ENCODE measurements at regions of chr3 and their contacts with region 1.

Region 1: DNA sequence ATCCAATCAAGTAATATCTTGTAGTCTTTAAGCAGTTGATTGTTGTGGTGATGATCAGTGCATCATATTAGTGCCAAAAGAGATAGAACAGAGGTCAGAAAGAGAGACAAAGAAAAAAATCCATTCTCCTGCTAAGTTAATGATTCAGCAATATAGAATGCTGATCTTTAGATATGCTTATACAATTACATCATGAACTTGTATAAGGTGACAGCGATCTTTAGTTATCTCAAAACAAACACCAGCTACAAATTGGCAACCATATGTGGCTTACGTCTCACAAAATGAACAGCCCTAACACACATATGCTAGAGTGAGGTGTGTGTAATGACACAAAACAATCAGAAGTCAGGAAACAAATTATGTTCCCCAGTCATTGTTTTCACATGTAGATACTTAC is 12.5 kb downstream of the LSAMP start:
- DNase-seq: no peak
- ATAC-seq: no peak
- H3K4me3 Mint-ChIP-seq: no peak overlapping the region
- H3K27ac Mint-ChIP-seq: no peak overlapping the region
- H3K4me1 Mint-ChIP-seq: peaks cover 5% of the 10 kb centered on the region
- H3K27me3 Mint-ChIP-seq: no peaks in the 10 kb centered on the region
- CTCF ChIP-seq: no peak

Region 2: DNA sequence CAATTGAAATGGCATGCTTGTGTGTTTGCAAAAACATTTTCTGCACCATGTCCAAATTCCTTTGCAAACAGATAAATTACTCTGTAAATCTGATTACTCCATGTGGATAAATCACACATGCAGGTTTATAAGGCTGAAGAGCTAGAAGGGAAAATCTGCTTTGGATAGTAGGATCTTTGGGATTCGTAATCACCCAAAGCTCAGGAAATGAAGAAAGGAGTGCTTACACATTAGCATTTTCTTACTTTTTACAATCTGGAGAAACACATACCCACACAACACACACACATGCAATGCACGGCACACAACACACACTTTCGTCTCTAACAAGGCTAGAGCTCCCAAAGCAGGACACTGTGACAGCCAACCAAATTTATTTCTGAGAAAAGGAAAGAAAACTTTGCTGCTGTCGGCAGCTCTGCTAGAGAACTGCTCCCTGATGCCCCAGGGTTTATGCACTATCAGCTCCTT is 10.4 kb after region 1 on chr3:
- CTCF ChIA-PET with region 1: interaction called, 13 read pairs
- POLR2A ChIA-PET with region 1: no interaction called
- DNase-seq: no peak
- ATAC-seq: no peak
- H3K4me3 Mint-ChIP-seq: peak overlapping the region; percentile 91
- H3K27ac Mint-ChIP-seq: no peak overlapping the region
- H3K4me1 Mint-ChIP-seq: peaks cover 48% of the 10 kb centered on the region
- H3K27me3 Mint-ChIP-seq: peaks cover 22% of the 10 kb centered on the region
- CTCF ChIP-seq: no peak